Activated CD4-positive, alpha-beta T cell treated with anti-CD3 and anti-CD28 coated beads for 36 hours (primary cell): ENCODE measurements at regions of chr16 and their contacts with region 1.

Region 1: GRCh38 chr16:70267516-70267915 is 15.8 kb upstream of the EXOSC6 start:
- DNase-seq: peak; percentile 51
- ATAC-seq: no peak
- H3K4me3 Mint-ChIP-seq: no peak overlapping the region
- H3K27ac Mint-ChIP-seq: no peak overlapping the region
- H3K4me1 Mint-ChIP-seq: no peaks in the 10 kb centered on the region
- H3K27me3 Mint-ChIP-seq: no peaks in the 10 kb centered on the region

Region 2: GRCh38 chr16:70251629-70252354 is 15.7 kb before region 1 on chr16 and contains the start of gene EXOSC6:
- CTCF ChIA-PET with region 1: interaction called, 17 read pairs
- POLR2A ChIA-PET with region 1: interaction called, 3 read pairs
- intact Hi-C with region 1: no loop called
- DNase-seq: peak; percentile 96
- ATAC-seq: peak; percentile 94
- H3K4me3 Mint-ChIP-seq: peak within 1 kb of the TSS; percentile 85
- H3K27ac Mint-ChIP-seq: peak within 1 kb of the TSS; percentile 84
- H3K4me1 Mint-ChIP-seq: peaks cover 16% of the 10 kb centered on the region
- H3K27me3 Mint-ChIP-seq: no peaks in the 10 kb centered on the region
- total RNA-seq, gene EXOSC6: 18.7 to 23.5 TPM

Region 3: GRCh38 chr16:70553645-70554044 is 286.1 kb after region 1 on chr16:
- CTCF ChIA-PET with region 1: interaction called, 6 read pairs
- POLR2A ChIA-PET with region 1: interaction called, 15 read pairs
- intact Hi-C with region 1: loop called in 1 of 2 experiments (anchors 5 kb)
- DNase-seq: no peak
- ATAC-seq: no peak
- H3K4me3 Mint-ChIP-seq: no peak overlapping the region
- H3K27ac Mint-ChIP-seq: no peak overlapping the region
- H3K4me1 Mint-ChIP-seq: peaks cover 8% of the 10 kb centered on the region
- H3K27me3 Mint-ChIP-seq: no peaks in the 10 kb centered on the region